ENCODE measurements at regions of chr6 and their contacts with region 1.

Region 1: DNA sequence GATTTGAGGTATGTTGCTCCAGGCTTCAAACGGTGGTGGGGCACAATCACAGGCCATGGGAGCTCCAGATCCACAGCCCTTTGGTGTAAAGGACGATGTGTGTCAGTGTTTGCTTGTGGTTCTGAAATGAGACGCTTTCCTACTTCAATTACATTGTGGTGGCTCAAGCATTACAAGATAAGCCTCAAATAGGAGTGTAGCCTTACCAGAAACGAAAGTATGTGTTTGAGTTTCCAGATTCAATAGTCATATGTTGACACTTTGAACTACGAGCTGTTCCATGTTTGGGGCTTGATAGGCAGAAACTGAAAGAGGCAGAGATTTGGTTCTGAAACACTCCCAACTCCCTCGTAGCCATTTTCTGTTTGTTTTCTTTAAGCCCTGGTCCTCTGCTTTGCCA is 187.1 kb downstream of the MYLK4 start:
- DNase-seq: peak; percentile 48
- H3K4me3 Mint-ChIP-seq: no peak overlapping the region
- H3K27ac Mint-ChIP-seq: no peak overlapping the region
- H3K4me1 Mint-ChIP-seq: peaks cover 11% of the 10 kb centered on the region
- H3K27me3 Mint-ChIP-seq: peaks cover 61% of the 10 kb centered on the region

Region 2: GRCh38 chr6:2542858-2543218 is 20.8 kb before region 1 on chr6:
- CTCF ChIA-PET with region 1: no interaction called
- POLR2A ChIA-PET with region 1: interaction called, 5 read pairs
- intact Hi-C with region 1: loop called (anchors 1 kb)
- DNase-seq: peak; percentile 54
- H3K4me3 Mint-ChIP-seq: peak overlapping the region; percentile 4
- H3K27ac Mint-ChIP-seq: no peak overlapping the region
- H3K4me1 Mint-ChIP-seq: peaks cover 24% of the 10 kb centered on the region
- H3K27me3 Mint-ChIP-seq: peaks cover 68% of the 10 kb centered on the region